ENCODE measurements at regions of chr6 and their contacts with region 1.

Region 1: DNA sequence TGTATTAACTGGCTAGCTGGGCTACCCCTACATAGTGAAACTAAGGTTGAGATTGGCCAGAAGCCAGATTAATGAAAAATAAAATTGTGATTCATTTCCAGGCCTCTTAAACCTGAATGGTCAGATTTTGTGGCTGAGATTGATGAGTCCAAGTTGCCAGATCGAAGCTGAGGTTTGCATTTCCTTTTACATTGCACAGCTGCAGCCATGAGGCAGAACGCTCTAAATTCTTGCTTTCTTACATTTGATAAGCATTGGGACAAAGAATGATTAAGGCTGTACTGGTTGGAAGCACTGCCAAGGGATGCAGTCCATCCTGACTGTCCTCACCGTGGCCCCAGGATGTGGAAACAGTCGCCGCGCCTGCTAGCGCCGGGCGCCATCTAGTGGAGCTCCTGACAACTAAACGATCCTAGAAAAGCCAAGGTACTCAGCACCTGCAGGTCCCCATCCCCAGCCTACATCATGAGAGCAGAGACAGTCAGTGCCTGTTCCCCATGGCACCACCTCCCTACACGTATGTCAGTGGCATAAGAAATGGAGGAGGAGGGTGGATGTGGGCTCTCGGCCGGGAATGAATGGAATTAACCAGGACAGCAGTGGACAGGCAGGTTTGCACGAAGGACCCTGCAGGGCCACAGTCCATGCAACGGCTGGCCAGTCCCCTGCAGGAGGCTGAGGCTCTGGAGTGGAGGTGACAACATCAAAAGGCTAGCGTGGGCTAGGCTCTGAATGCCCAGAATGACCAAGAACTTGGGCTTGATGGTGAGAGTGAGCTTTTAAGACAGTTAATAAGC is 19.0 kb downstream of the PXDC1 start:
- DNase-seq: peak; percentile 75 to 82
- H3K4me3 ChIP-seq: no peak overlapping the region
- H3K4me3 Mint-ChIP-seq: no peak overlapping the region
- H3K27ac Mint-ChIP-seq: no peak overlapping the region
- H3K4me1 ChIP-seq: no peaks in the 10 kb centered on the region
- H3K4me1 Mint-ChIP-seq: no peaks in the 10 kb centered on the region
- H3K27me3 ChIP-seq: no peaks in the 10 kb centered on the region
- H3K27me3 Mint-ChIP-seq: no peaks in the 10 kb centered on the region
- CTCF ChIP-seq: peak; percentile 89 to 93

Region 2: GRCh38 chr6:2999618-3000557 is 732.7 kb before region 1 on chr6 and contains the start of gene NQO2:
- CTCF ChIA-PET with region 1: no interaction called
- POLR2A ChIA-PET with region 1: no interaction called
- intact Hi-C with region 1: no loop called
- DNase-seq: peak; percentile 91 to 95
- H3K4me3 ChIP-seq: peak within 1 kb of the TSS; percentile 62
- H3K4me3 Mint-ChIP-seq: peak within 1 kb of the TSS; percentile 83
- H3K27ac Mint-ChIP-seq: peak within 1 kb of the TSS; percentile 72
- H3K4me1 ChIP-seq: no peaks in the 10 kb centered on the region
- H3K4me1 Mint-ChIP-seq: peaks cover 7% of the 10 kb centered on the region
- H3K27me3 ChIP-seq: no peaks in the 10 kb centered on the region
- H3K27me3 Mint-ChIP-seq: no peaks in the 10 kb centered on the region
- CTCF ChIP-seq: peak in 1 of 2 experiments; percentile 0
- total RNA-seq, gene NQO2: 35.8 and 37.2 TPM in 2 replicates

Region 3: DNA sequence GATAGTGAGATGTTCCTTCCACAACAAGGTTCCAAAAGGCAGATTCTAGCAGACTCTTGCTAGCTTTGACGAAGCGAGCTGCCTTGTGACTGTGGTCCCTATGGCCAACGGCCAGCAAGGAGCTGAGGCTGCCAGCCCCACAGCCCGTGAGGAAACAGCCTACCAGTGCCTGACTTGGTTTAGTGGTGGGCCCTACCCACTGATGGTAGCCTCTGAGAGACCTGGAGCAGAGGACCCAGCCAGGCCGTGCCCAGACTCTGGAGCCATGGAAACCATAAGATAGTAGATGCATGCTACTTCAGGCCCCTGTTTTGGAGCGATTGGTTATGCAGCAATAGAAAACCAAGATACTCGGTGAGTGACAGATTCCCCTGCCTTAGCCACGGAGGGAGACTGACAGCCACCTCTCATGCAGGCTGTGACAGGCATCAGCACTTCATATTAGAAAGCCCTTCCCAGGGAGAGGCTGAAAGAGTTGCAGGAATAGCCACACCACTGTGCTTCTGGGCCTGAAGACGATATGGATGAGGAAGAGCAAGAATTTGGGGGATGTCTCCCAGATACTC is 454.6 kb before region 1 on chr6:
- CTCF ChIA-PET with region 1: interaction called, 6 read pairs
- POLR2A ChIA-PET with region 1: no interaction called
- intact Hi-C with region 1: loop called (anchors 1 kb)
- DNase-seq: no peak
- H3K4me3 ChIP-seq: no peak overlapping the region
- H3K4me3 Mint-ChIP-seq: no peak overlapping the region
- H3K27ac Mint-ChIP-seq: no peak overlapping the region
- H3K4me1 ChIP-seq: no peaks in the 10 kb centered on the region
- H3K4me1 Mint-ChIP-seq: no peaks in the 10 kb centered on the region
- H3K27me3 ChIP-seq: no peaks in the 10 kb centered on the region
- H3K27me3 Mint-ChIP-seq: no peaks in the 10 kb centered on the region
- CTCF ChIP-seq: no peak

Region 4: GRCh38 chr6:3410385-3411360 is 321.9 kb before region 1 on chr6:
- CTCF ChIA-PET with region 1: no interaction called
- POLR2A ChIA-PET with region 1: no interaction called
- intact Hi-C with region 1: loop called (anchors 2 kb)
- DNase-seq: peak; percentile 78
- H3K4me3 ChIP-seq: peak overlapping the region; percentile 20
- H3K4me3 Mint-ChIP-seq: peak overlapping the region; percentile 47
- H3K27ac Mint-ChIP-seq: peak overlapping the region; percentile 86
- H3K4me1 ChIP-seq: peaks cover 88% of the 10 kb centered on the region
- H3K4me1 Mint-ChIP-seq: peaks cover 62% of the 10 kb centered on the region
- H3K27me3 ChIP-seq: no peaks in the 10 kb centered on the region
- H3K27me3 Mint-ChIP-seq: no peaks in the 10 kb centered on the region
- CTCF ChIP-seq: peak; percentile 77 to 79

Region 5: GRCh38 chr6:3522561-3523250 is 209.8 kb before region 1 on chr6:
- CTCF ChIA-PET with region 1: no interaction called
- POLR2A ChIA-PET with region 1: no interaction called
- intact Hi-C with region 1: loop called (anchors 5 kb)
- DNase-seq: peak; percentile 48 to 50
- H3K4me3 ChIP-seq: no peak overlapping the region
- H3K4me3 Mint-ChIP-seq: peak overlapping the region; percentile 23
- H3K27ac Mint-ChIP-seq: peak overlapping the region; percentile 88
- H3K4me1 ChIP-seq: peaks cover 83% of the 10 kb centered on the region
- H3K4me1 Mint-ChIP-seq: peaks cover 37% of the 10 kb centered on the region
- H3K27me3 ChIP-seq: no peaks in the 10 kb centered on the region
- H3K27me3 Mint-ChIP-seq: no peaks in the 10 kb centered on the region
- CTCF ChIP-seq: no peak

Region 6: GRCh38 chr6:3664625-3665041 is 67.9 kb before region 1 on chr6:
- CTCF ChIA-PET with region 1: no interaction called
- POLR2A ChIA-PET with region 1: no interaction called
- intact Hi-C with region 1: loop called (anchors 2 kb)
- DNase-seq: peak; percentile 78 to 80
- H3K4me3 ChIP-seq: peak overlapping the region; percentile 12; the same call in 1 of the 2 replicates
- H3K4me3 Mint-ChIP-seq: peak overlapping the region; percentile 70
- H3K27ac Mint-ChIP-seq: peak overlapping the region; percentile 82
- H3K4me1 ChIP-seq: peaks cover 36% of the 10 kb centered on the region
- H3K4me1 Mint-ChIP-seq: peaks cover 18% of the 10 kb centered on the region
- H3K27me3 ChIP-seq: no peaks in the 10 kb centered on the region
- H3K27me3 Mint-ChIP-seq: no peaks in the 10 kb centered on the region
- CTCF ChIP-seq: no peak